A549 (cell line): ENCODE measurements at regions of chr9 and their contacts with region 1.

Region 1: DNA sequence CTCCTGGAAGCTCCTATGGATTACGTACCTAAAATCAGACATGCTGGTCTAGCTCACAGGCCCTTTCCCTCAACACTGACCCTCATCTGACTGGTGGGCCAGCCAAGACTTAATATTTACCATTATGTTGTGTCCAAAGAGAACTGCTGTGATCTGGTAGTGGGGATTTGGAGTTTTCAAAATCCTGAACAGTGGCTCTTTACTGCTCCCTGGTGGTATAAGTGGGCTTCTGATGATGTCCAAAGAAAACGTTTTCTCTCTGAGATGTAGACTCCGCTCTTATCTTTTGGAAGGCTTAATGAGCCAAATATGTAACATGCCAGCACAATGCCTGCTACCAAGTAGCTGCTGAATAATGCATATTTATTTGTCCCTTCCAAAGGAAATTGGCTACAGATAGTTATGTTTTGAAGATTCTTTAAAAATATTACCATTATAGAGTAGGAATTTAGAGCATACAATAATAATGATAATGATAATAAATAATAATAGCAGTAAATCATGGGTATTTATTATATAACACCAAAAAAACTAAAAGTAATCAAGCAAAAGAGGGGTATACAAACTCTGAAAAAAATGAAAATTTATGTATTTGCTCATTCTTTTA is 406.6 kb upstream of the TNC start:
- DNase-seq: peak; percentile 38 to 55
- ATAC-seq: peak in 1 of 2 experiments; percentile 80; a peak in 4 of 6 replicates
- H3K4me3 ChIP-seq: no peak overlapping the region
- H3K27ac ChIP-seq: no peak overlapping the region
- H3K4me1 ChIP-seq: no peaks in the 10 kb centered on the region
- CTCF ChIP-seq: peak; percentile 87
- EP300 ChIP-seq: no peak
- POLR2A ChIP-seq: no peak
- RAD21 ChIP-seq: peak; percentile 94 to 95

Region 2: GRCh38 chr9:115226127-115226526 is 298.4 kb before region 1 on chr9:
- CTCF ChIA-PET with region 1: interaction called, 13 read pairs
- POLR2A ChIA-PET with region 1: no interaction called
- DNase-seq: no peak
- ATAC-seq: no peak
- H3K4me3 ChIP-seq: no peak overlapping the region
- H3K27ac ChIP-seq: no peak overlapping the region
- H3K4me1 ChIP-seq: peaks cover 3% of the 10 kb centered on the region; the same call in 1 of the 3 replicates
- CTCF ChIP-seq: peak; percentile 60
- EP300 ChIP-seq: no peak
- POLR2A ChIP-seq: no peak
- RAD21 ChIP-seq: peak; percentile 69 to 71

Region 3: GRCh38 chr9:115498303-115498702 is 26.3 kb before region 1 on chr9:
- CTCF ChIA-PET with region 1: interaction called, 11 read pairs
- POLR2A ChIA-PET with region 1: no interaction called
- DNase-seq: peak; percentile 5 to 24
- ATAC-seq: peak; percentile 48 to 66; a peak in 3 of 6 replicates
- H3K4me3 ChIP-seq: no peak overlapping the region
- H3K27ac ChIP-seq: no peak overlapping the region
- H3K4me1 ChIP-seq: peaks cover 24% of the 10 kb centered on the region
- CTCF ChIP-seq: no peak
- EP300 ChIP-seq: no peak
- POLR2A ChIP-seq: no peak
- RAD21 ChIP-seq: no peak

Region 4: GRCh38 chr9:115513148-115513547 is 11.4 kb before region 1 on chr9:
- CTCF ChIA-PET with region 1: interaction called, 25 read pairs
- POLR2A ChIA-PET with region 1: no interaction called
- DNase-seq: no peak
- ATAC-seq: no peak
- H3K4me3 ChIP-seq: no peak overlapping the region
- H3K27ac ChIP-seq: no peak overlapping the region
- H3K4me1 ChIP-seq: no peaks in the 10 kb centered on the region
- CTCF ChIP-seq: no peak
- EP300 ChIP-seq: no peak
- POLR2A ChIP-seq: no peak
- RAD21 ChIP-seq: no peak